ENCODE measurements at regions of chr16 and their contacts with region 1.

Region 1: GRCh38 chr16:29943846-29944669 is 17.8 kb upstream of the TMEM219 start:
- DNase-seq: peak; percentile 45
- ATAC-seq: peak; percentile 74 to 100

Region 2: GRCh38 chr16:29883987-29884386 is 60.1 kb before region 1 on chr16:
- intact Hi-C with region 1: loop called in 1 of 2 experiments (anchors 10 kb)
- DNase-seq: no peak
- ATAC-seq: no peak

Measured in left cardiac atrium (tissue), 4 donors.